HCT116 (cell line): ENCODE measurements at regions of chr6 and their contacts with region 1.

Region 1: GRCh38 chr6:3732345-3733141 is 19.0 kb downstream of the PXDC1 start:
- DNase-seq: no peak
- ATAC-seq: peak; percentile 98
- H3K4me3 ChIP-seq: no peak overlapping the region
- H3K27ac ChIP-seq: no peak overlapping the region
- H3K4me1 ChIP-seq: no peaks in the 10 kb centered on the region
- H3K27me3 ChIP-seq: no peaks in the 10 kb centered on the region
- CTCF ChIP-seq: peak; percentile 82 to 86 (median 86)
- POLR2A ChIP-seq: no peak
- RAD21 ChIP-seq: peak; percentile 98

Region 2: DNA sequence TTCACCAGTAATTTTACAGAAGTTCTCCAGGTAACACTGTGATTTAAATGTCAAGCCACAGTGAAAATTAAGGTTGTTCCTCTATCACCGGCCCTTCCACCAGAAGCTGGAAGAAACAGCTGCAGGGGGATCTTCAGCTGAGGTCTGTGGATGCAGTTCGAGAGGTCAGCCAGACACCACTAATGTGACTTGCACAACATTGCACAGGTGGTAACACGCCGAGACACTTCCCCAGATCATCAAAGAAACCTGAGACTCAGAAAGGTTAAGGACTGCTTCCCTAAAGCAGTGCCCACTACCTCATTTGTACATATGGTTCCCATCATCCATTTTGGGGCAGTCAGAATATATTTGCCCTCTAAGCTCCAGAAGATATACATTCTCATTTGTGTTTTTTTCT is 821.4 kb before region 1 on chr6:
- CTCF ChIA-PET with region 1: no interaction called
- POLR2A ChIA-PET with region 1: no interaction called
- RAD21 ChIA-PET with region 1: no interaction called
- intact Hi-C with region 1: no loop called
- DNase-seq: no peak
- ATAC-seq: no peak
- H3K4me3 ChIP-seq: no peak overlapping the region
- H3K27ac ChIP-seq: no peak overlapping the region
- H3K4me1 ChIP-seq: peaks cover 0 to 20% of the 10 kb centered on the region in 2 experiments; a peak in 2 of 4 replicates
- H3K27me3 ChIP-seq: no peaks in the 10 kb centered on the region
- CTCF ChIP-seq: no peak
- POLR2A ChIP-seq: no peak
- RAD21 ChIP-seq: no peak

Region 3: GRCh38 chr6:3280091-3280490 is 452.5 kb before region 1 on chr6:
- CTCF ChIA-PET with region 1: interaction called, 22 read pairs
- POLR2A ChIA-PET with region 1: no interaction called
- RAD21 ChIA-PET with region 1: interaction called in 1 of 2 experiments, 8 read pairs
- intact Hi-C with region 1: loop called (anchors 1 kb)
- DNase-seq: no peak
- ATAC-seq: 0 out of 2 replicates have a peak, but pooled peaks have one; percentile 21
- H3K4me3 ChIP-seq: no peak overlapping the region
- H3K27ac ChIP-seq: no peak overlapping the region
- H3K4me1 ChIP-seq: no peaks in the 10 kb centered on the region
- H3K27me3 ChIP-seq: no peaks in the 10 kb centered on the region
- CTCF ChIP-seq: no peak
- POLR2A ChIP-seq: no peak
- RAD21 ChIP-seq: no peak

Region 4: GRCh38 chr6:3294921-3295871 is 437.3 kb before region 1 on chr6:
- CTCF ChIA-PET with region 1: no interaction called
- POLR2A ChIA-PET with region 1: no interaction called
- RAD21 ChIA-PET with region 1: no interaction called
- intact Hi-C with region 1: loop called (anchors 5 kb)
- DNase-seq: no peak
- ATAC-seq: peak; percentile 70
- H3K4me3 ChIP-seq: no peak overlapping the region
- H3K27ac ChIP-seq: no peak overlapping the region
- H3K4me1 ChIP-seq: no peaks in the 10 kb centered on the region
- H3K27me3 ChIP-seq: no peaks in the 10 kb centered on the region
- CTCF ChIP-seq: peak; percentile 22 to 29 (median 29); a peak in 5 of 6 replicates
- POLR2A ChIP-seq: no peak
- RAD21 ChIP-seq: peak; percentile 54

Region 5: GRCh38 chr6:3410385-3411360 is 321.9 kb before region 1 on chr6:
- CTCF ChIA-PET with region 1: interaction called, 10 read pairs
- POLR2A ChIA-PET with region 1: no interaction called
- RAD21 ChIA-PET with region 1: interaction called in 1 of 2 experiments, 3 read pairs
- intact Hi-C with region 1: loop called (anchors 2 kb)
- DNase-seq: peak; percentile 51
- ATAC-seq: peak; percentile 87
- H3K4me3 ChIP-seq: no peak overlapping the region
- H3K27ac ChIP-seq: no peak overlapping the region
- H3K4me1 ChIP-seq: no peaks in the 10 kb centered on the region; a peak in 1 of 4 replicates
- H3K27me3 ChIP-seq: no peaks in the 10 kb centered on the region
- CTCF ChIP-seq: peak; percentile 49 to 95 (median 87); a peak in 5 of 6 replicates
- POLR2A ChIP-seq: no peak
- RAD21 ChIP-seq: peak; percentile 76

Region 6: GRCh38 chr6:3456755-3457466 is 275.6 kb before region 1 on chr6 and contains the start of gene SLC22A23:
- CTCF ChIA-PET with region 1: no interaction called
- POLR2A ChIA-PET with region 1: no interaction called
- RAD21 ChIA-PET with region 1: no interaction called
- intact Hi-C with region 1: loop called (anchors 1 kb)
- DNase-seq: peak; percentile 46
- ATAC-seq: peak; percentile 77
- H3K4me3 ChIP-seq: peak within 1 kb of the TSS; percentile 60 to 75
- H3K27ac ChIP-seq: peak within 1 kb of the TSS; percentile 60; the same call in 1 of the 2 replicates
- H3K4me1 ChIP-seq: peaks cover 10 to 22% of the 10 kb centered on the region in 2 experiments
- H3K27me3 ChIP-seq: no peaks in the 10 kb centered on the region
- CTCF ChIP-seq: peak; percentile 32 to 72 (median 51); a peak in 5 of 6 replicates
- POLR2A ChIP-seq: peak; percentile 30
- RAD21 ChIP-seq: peak; percentile 53
- total RNA-seq, gene SLC22A23: 11.5 TPM

Region 7: GRCh38 chr6:3797231-3798054 is 64.9 kb after region 1 on chr6:
- CTCF ChIA-PET with region 1: no interaction called
- POLR2A ChIA-PET with region 1: no interaction called
- RAD21 ChIA-PET with region 1: no interaction called
- intact Hi-C with region 1: no loop called
- DNase-seq: no peak
- ATAC-seq: peak; percentile 65
- H3K4me3 ChIP-seq: peak overlapping the region in 1 of 2 experiments; percentile 8; a peak in 1 of 4 replicates
- H3K27ac ChIP-seq: no peak overlapping the region
- H3K4me1 ChIP-seq: peaks cover 8 to 27% of the 10 kb centered on the region in 2 experiments
- H3K27me3 ChIP-seq: no peaks in the 10 kb centered on the region
- CTCF ChIP-seq: no peak
- POLR2A ChIP-seq: no peak
- RAD21 ChIP-seq: no peak

Region 8: GRCh38 chr6:3835055-3835731 is 102.7 kb after region 1 on chr6:
- CTCF ChIA-PET with region 1: no interaction called
- POLR2A ChIA-PET with region 1: no interaction called
- RAD21 ChIA-PET with region 1: no interaction called
- intact Hi-C with region 1: no loop called
- DNase-seq: no peak
- ATAC-seq: peak; percentile 84
- H3K4me3 ChIP-seq: no peak overlapping the region
- H3K27ac ChIP-seq: no peak overlapping the region
- H3K4me1 ChIP-seq: no peaks in the 10 kb centered on the region; a peak in 1 of 4 replicates
- H3K27me3 ChIP-seq: no peaks in the 10 kb centered on the region
- CTCF ChIP-seq: peak; percentile 47 to 60 (median 55)
- POLR2A ChIP-seq: no peak
- RAD21 ChIP-seq: peak; percentile 71